Activated B cell treated with CpG ODN at 0.5 μM for 24 hours (primary cell): ENCODE measurements at regions of chr3 and their contacts with region 1.

Region 1: DNA sequence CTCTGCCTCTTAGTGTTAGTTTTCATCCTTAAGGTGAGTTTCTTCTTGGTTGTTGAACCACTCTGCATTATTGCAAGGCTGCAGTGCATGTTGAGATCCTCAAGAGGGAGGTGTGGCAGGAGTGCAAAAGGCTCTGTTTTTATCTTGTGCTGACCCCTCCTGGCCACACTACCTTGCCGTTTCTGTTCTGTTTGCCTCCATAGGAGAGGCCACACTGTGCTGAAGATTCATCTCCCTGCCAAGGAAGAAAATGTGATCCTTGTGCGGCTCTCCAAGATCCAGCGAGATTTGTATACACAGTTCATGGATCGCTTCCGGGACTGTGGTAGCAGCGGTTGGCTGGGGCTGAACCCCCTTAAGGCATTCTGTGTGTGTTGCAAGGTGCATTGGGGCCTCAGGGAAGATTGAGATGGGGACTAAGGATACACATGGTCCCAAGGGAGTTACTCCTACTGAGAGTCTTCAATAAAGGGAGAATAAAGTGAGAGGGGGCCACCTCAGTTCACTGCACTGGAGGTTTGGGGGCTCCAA is 33.0 kb upstream of the TEX264 start:
- DNase-seq: no peak
- ATAC-seq: peak; percentile 90
- H3K4me3 Mint-ChIP-seq: no peak overlapping the region
- H3K27ac Mint-ChIP-seq: no peak overlapping the region
- H3K4me1 Mint-ChIP-seq: no peaks in the 10 kb centered on the region
- H3K27me3 Mint-ChIP-seq: no peaks in the 10 kb centered on the region
- CTCF ChIP-seq: no peak

Region 2: GRCh38 chr3:51799879-51800749 is 162.1 kb after region 1 on chr3:
- CTCF ChIA-PET with region 1: interaction called, 5 read pairs
- POLR2A ChIA-PET with region 1: no interaction called
- intact Hi-C with region 1: loop called (anchors 2 kb)
- DNase-seq: no peak
- ATAC-seq: no peak
- H3K4me3 Mint-ChIP-seq: no peak overlapping the region
- H3K27ac Mint-ChIP-seq: no peak overlapping the region
- H3K4me1 Mint-ChIP-seq: no peaks in the 10 kb centered on the region
- H3K27me3 Mint-ChIP-seq: peaks cover 24% of the 10 kb centered on the region
- CTCF ChIP-seq: no peak